GM12878 (cell line): ENCODE measurements at regions of chr18 and their contacts with region 1.

Region 1: GRCh38 chr18:26190506-26190905 is 35.7 kb upstream of the TAF4B start:
- DNase-seq: peak; percentile 74
- ATAC-seq: peak; percentile 94
- H3K4me3 ChIP-seq: peak overlapping the region; percentile 58
- H3K27ac ChIP-seq: peak overlapping the region; percentile 77
- H3K4me1 ChIP-seq: peaks cover 12% of the 10 kb centered on the region
- H3K27me3 ChIP-seq: no peaks in the 10 kb centered on the region
- CTCF ChIP-seq: no peak
- EP300 ChIP-seq: peak in 1 of 2 experiments; percentile 30; a peak in 1 of 4 replicates
- POLR2A ChIP-seq: 0 out of 2 replicates have a peak, but pooled peaks have one; percentile 38
- RAD21 ChIP-seq: no peak

Region 2: DNA sequence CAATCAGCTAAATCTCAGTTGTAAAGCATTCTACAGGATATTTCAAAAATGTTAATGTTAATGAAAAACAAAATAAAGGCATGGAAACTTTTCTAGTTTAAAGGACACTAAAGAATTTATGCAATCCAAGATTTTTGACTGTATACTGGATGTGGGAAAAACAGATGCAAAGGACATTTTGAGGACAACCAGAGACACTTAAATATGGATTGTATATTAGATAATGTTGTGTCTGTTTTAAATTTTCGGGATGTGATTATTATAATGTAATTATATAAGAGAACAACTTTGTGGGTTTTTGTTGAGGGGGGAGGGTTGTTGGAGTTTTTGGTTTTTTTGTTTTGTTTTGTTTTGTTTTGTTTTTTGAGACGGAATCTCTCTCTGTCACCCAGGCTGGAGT is 25.9 kb before region 1 on chr18:
- CTCF ChIA-PET with region 1: interaction called, 3 read pairs
- POLR2A ChIA-PET with region 1: interaction called, 3 read pairs
- RAD21 ChIA-PET with region 1: interaction called, 10 read pairs
- SMC1A ChIA-PET with region 1: interaction called, 26 read pairs
- in situ Hi-C with region 1: no loop called
- intact Hi-C with region 1: no loop called
- DNase-seq: no peak
- ATAC-seq: no peak
- H3K4me3 ChIP-seq: no peak overlapping the region
- H3K27ac ChIP-seq: no peak overlapping the region
- H3K4me1 ChIP-seq: peaks cover 4% of the 10 kb centered on the region; the same call in 1 of the 2 replicates
- H3K27me3 ChIP-seq: no peaks in the 10 kb centered on the region
- CTCF ChIP-seq: no peak
- EP300 ChIP-seq: no peak
- POLR2A ChIP-seq: no peak
- RAD21 ChIP-seq: no peak

Region 3: DNA sequence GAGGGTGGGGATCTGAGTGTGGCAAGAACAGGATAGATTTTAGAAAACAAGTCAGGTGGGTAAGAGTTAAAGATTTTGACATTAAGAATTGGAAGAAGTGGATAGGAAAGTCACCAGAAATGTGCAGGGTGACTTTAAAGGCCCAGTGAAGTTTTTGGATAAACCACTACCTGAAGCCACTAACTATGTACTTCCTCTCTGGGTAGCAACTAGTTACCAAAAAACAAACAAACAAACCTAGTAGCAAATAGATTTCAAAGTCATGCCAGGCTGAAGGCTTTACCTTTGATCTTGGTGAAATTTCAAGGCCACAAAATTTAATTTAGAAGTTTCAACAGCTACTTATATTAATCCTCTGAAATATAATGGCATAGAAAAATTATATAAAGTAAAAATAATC is 14.4 kb before region 1 on chr18:
- CTCF ChIA-PET with region 1: interaction called, 34 read pairs
- POLR2A ChIA-PET with region 1: interaction called, 5 read pairs
- RAD21 ChIA-PET with region 1: interaction called, 9 read pairs
- SMC1A ChIA-PET with region 1: interaction called, 40 read pairs
- in situ Hi-C with region 1: no loop called
- intact Hi-C with region 1: no loop called
- DNase-seq: no peak
- ATAC-seq: peak; percentile 63
- H3K4me3 ChIP-seq: no peak overlapping the region
- H3K27ac ChIP-seq: no peak overlapping the region
- H3K4me1 ChIP-seq: no peaks in the 10 kb centered on the region
- H3K27me3 ChIP-seq: no peaks in the 10 kb centered on the region
- CTCF ChIP-seq: no peak
- EP300 ChIP-seq: no peak
- POLR2A ChIP-seq: no peak
- RAD21 ChIP-seq: no peak

Region 4: GRCh38 chr18:26226229-26227005 is 35.9 kb after region 1 on chr18 and contains the start of gene TAF4B:
- CTCF ChIA-PET with region 1: no interaction called
- POLR2A ChIA-PET with region 1: interaction called, 6 read pairs
- RAD21 ChIA-PET with region 1: interaction called, 9 read pairs
- SMC1A ChIA-PET with region 1: interaction called, 6 read pairs
- in situ Hi-C with region 1: no loop called
- intact Hi-C with region 1: loop called (anchors 1 kb)
- DNase-seq: peak; percentile 68
- ATAC-seq: peak; percentile 84
- H3K4me3 ChIP-seq: peak within 1 kb of the TSS; percentile 72
- H3K27ac ChIP-seq: peak within 1 kb of the TSS; percentile 54
- H3K4me1 ChIP-seq: no peaks in the 10 kb centered on the region
- H3K27me3 ChIP-seq: no peaks in the 10 kb centered on the region
- CTCF ChIP-seq: no peak
- EP300 ChIP-seq: no peak
- POLR2A ChIP-seq: peak; percentile 88
- RAD21 ChIP-seq: no peak
- polyA plus RNA-seq, gene TAF4B: 2.3 to 4.4 TPM

Region 5: GRCh38 chr18:26397019-26397418 is 206.5 kb after region 1 on chr18:
- CTCF ChIA-PET with region 1: no interaction called
- POLR2A ChIA-PET with region 1: no interaction called
- RAD21 ChIA-PET with region 1: no interaction called
- SMC1A ChIA-PET with region 1: no interaction called
- in situ Hi-C with region 1: no loop called
- intact Hi-C with region 1: no loop called
- DNase-seq: no peak
- ATAC-seq: peak; percentile 61
- H3K4me3 ChIP-seq: no peak overlapping the region
- H3K27ac ChIP-seq: no peak overlapping the region
- H3K4me1 ChIP-seq: no peaks in the 10 kb centered on the region
- H3K27me3 ChIP-seq: no peaks in the 10 kb centered on the region
- CTCF ChIP-seq: no peak
- EP300 ChIP-seq: no peak
- POLR2A ChIP-seq: no peak
- RAD21 ChIP-seq: no peak

Region 6: GRCh38 chr18:27331606-27332005 is 1141.1 kb after region 1 on chr18:
- CTCF ChIA-PET with region 1: no interaction called
- POLR2A ChIA-PET with region 1: no interaction called
- RAD21 ChIA-PET with region 1: no interaction called
- SMC1A ChIA-PET with region 1: no interaction called
- in situ Hi-C with region 1: no loop called
- intact Hi-C with region 1: no loop called
- DNase-seq: no peak
- ATAC-seq: no peak
- H3K4me3 ChIP-seq: no peak overlapping the region
- H3K27ac ChIP-seq: no peak overlapping the region
- H3K4me1 ChIP-seq: no peaks in the 10 kb centered on the region
- H3K27me3 ChIP-seq: no peaks in the 10 kb centered on the region
- CTCF ChIP-seq: no peak
- EP300 ChIP-seq: no peak
- POLR2A ChIP-seq: no peak
- RAD21 ChIP-seq: no peak